ENCODE measurements at regions of chr2 and their contacts with region 1.

Region 1: GRCh38 chr2:177263451-177264208 is 897 bp downstream of the NFE2L2 start:
- H3K4me3 ChIP-seq: peak overlapping the region; percentile 95
- H3K27ac ChIP-seq: peak overlapping the region; percentile 96
- H3K4me1 ChIP-seq: peaks cover 12% of the 10 kb centered on the region
- CTCF ChIP-seq: peak; percentile 99

Region 2: GRCh38 chr2:176978921-176979320 is 284.7 kb before region 1 on chr2:
- CTCF ChIA-PET with region 1: no interaction called
- POLR2A ChIA-PET with region 1: no interaction called
- H3K4me3 ChIP-seq: no peak overlapping the region
- H3K27ac ChIP-seq: no peak overlapping the region
- H3K4me1 ChIP-seq: no peaks in the 10 kb centered on the region
- CTCF ChIP-seq: no peak

Region 3: DNA sequence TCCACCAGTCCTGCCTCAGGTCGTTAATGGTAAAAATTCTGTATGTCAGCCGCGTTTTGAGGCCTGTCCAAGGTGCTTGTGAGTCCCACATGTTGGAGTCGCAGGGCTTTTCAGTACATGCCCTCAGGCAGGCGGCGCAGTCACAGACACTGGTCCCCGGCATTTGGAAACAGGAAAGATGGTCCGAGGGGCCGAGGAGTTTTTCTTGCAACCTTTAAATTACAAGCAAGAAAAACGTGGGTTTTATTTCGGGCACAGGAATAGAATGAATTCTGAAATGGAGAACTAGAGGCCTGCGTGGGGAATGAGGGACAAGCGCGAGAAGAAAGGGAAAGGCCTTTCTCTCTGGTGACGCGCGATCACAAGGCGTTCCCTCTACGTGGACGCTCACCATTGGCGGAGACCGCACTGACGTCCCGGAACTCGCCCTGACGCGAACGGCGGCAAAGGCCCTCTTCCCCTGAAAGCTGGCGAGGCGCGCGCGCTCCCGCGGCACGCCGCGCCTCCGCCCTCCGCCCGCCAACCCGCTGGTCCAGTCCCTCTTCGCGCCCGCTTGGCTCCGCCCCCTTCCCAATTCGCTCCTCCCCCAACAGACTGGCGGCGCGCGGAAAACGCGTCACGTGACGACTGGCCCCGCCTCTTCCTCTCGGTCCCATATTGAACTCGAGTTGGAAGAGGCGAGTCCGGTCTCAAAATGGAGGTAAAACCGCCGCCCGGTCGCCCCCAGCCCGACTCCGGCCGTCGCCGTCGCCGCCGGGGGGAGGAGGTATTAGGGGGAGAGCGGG is 51.3 kb before region 1 on chr2 and contains the start of gene HNRNPA3:
- CTCF ChIA-PET with region 1: no interaction called
- POLR2A ChIA-PET with region 1: interaction called, 23 read pairs
- H3K4me3 ChIP-seq: peak within 1 kb of the TSS; percentile 93
- H3K27ac ChIP-seq: peak within 1 kb of the TSS; percentile 82
- H3K4me1 ChIP-seq: no peaks in the 10 kb centered on the region
- CTCF ChIP-seq: no peak

Region 4: DNA sequence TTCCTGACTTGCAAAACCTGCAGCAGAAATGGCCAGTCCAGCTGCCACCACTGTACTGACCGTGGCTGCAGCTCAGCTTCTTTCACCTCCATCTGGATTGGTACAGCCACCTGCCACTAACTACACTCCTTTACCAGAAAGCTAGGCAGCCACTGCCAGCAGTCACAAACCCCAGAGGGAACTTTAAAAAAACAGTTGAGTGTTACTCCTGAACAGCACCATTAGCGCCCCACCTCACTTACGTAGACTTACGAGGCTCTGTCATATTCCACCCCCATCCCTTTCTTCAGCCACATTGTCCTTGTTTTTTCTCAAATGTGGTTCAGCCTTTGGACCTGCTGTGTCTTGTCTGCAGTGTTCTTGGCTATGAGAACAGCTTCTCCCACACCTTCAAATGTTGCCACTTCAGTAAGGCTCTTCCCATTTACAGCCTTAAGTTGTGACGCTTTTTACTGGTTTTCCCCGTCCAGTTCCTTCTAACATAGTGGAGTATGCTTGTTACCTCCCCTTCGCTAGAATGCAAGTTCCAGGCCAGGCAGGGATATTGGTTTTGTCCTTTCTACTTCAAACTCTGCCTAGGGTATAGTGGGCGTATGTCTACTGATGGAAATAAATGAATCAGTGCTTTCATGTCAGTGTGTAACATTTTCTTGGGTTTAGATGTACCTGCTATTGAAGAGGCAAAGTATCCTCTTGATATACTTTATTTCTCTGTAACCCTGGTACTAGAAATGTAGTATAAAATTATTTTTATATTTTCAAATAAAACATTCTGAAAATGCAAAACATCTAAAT is 34.0 kb before region 1 on chr2:
- CTCF ChIA-PET with region 1: interaction called, 4 read pairs
- POLR2A ChIA-PET with region 1: interaction called, 10 read pairs
- H3K4me3 ChIP-seq: no peak overlapping the region
- H3K27ac ChIP-seq: no peak overlapping the region
- H3K4me1 ChIP-seq: no peaks in the 10 kb centered on the region
- CTCF ChIP-seq: no peak

Region 5: DNA sequence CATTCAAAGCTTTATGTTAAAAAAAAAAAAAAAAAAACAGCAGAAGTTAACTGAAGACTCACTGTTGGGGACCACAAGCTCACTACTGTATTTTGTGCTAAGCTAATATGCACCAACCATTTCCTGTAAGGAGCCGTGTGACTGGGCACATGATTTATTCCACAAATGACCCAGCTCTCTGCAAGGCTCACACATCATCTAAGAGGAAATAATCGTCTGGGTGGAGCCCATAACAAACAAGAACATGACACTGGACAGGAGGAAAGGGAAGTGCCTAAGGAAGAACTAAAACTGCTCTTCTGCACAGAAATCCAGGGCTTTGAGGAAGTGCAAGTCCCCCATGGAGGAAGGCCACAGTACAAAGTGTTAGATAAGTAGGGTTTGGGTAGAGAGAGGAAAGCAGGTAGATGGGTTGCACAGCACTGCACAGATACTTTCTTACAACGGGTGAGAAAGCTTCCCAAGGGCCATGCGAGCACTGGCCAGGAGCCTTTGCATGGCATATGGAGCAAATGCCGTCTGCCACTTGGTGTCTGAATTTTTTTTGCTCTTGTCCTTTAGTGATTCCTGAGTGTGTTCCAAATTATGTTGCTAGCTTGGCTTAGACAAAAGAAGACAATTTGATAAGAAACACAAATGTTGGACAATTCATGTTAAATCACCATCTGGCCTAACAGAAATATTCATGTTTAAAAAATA is 23.5 kb before region 1 on chr2:
- CTCF ChIA-PET with region 1: interaction called, 16 read pairs
- POLR2A ChIA-PET with region 1: interaction called, 18 read pairs
- H3K4me3 ChIP-seq: no peak overlapping the region
- H3K27ac ChIP-seq: no peak overlapping the region
- H3K4me1 ChIP-seq: peaks cover 30% of the 10 kb centered on the region
- CTCF ChIP-seq: no peak

Region 6: DNA sequence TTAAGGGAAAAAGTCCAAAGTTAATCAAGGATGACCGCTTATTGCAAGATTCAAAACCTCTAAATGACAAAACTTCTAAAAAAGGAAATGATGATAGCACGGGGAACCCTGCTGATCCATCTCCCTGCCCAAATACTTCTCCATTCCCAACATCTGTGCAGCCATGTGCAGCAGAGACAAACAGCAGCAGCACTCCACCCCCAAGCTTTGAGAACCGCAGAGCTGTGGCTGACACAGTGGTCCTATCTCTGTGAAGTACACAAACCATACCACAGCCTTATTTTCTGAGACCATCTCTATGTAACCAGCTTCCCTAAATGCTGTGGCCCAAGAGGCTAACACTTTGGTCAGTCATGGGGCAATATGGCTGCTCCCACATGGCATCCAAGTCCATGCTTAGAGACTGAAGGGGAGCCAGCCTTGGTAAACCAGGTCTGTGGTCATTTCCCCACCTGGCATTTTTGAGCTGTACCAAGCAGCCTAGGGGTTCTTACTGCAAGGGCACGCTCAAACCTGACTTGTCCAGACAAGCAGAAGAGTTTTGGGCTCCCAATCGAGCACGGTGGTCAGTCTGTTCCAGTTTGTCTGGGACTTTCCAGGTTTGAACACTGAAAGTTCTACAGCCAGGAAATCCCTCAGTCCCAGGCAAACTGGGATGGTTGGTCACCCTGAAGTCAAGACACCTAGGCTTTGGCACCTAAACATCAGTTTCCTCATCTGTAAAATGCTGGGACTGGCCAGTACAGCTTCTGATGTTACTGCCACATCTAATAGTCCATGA is 18.0 kb after region 1 on chr2:
- CTCF ChIA-PET with region 1: interaction called, 16 read pairs
- POLR2A ChIA-PET with region 1: interaction called, 7 read pairs
- H3K4me3 ChIP-seq: no peak overlapping the region
- H3K27ac ChIP-seq: no peak overlapping the region
- H3K4me1 ChIP-seq: no peaks in the 10 kb centered on the region
- CTCF ChIP-seq: no peak

Region 7: GRCh38 chr2:177296040-177296439 is 32.4 kb after region 1 on chr2:
- CTCF ChIA-PET with region 1: interaction called, 12 read pairs
- POLR2A ChIA-PET with region 1: interaction called, 8 read pairs
- H3K4me3 ChIP-seq: no peak overlapping the region
- H3K27ac ChIP-seq: no peak overlapping the region
- H3K4me1 ChIP-seq: no peaks in the 10 kb centered on the region
- CTCF ChIP-seq: no peak

Region 8: DNA sequence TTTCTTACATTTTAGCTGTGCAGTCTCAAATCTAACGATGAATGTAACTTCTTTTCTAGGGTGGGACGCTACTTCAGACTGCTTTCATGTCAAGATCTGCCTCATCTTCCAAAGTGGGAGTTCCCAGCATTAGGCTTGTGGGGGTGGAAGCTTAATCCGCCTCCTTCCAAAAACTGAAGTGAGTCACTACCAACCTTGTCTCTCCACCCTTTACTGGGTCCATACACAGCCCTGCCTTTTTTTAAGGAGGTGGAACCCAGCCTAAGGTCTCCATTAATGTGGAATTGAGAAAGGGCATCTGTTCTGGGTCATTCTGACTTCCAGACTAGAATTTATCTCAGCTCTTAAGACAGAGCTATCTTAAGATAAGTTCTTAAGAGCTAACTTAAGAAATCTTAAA is 42.9 kb after region 1 on chr2:
- CTCF ChIA-PET with region 1: no interaction called
- POLR2A ChIA-PET with region 1: no interaction called
- H3K4me3 ChIP-seq: no peak overlapping the region
- H3K27ac ChIP-seq: no peak overlapping the region
- H3K4me1 ChIP-seq: no peaks in the 10 kb centered on the region
- CTCF ChIP-seq: no peak

Measured in HEK293 (cell line).